A549 (cell line): ENCODE measurements at regions of chr14 and their contacts with region 1.

Region 1: GRCh38 chr14:55051426-55052268 is at the start of gene MAPK1IP1L:
- DNase-seq: peak; percentile 90 to 91
- ATAC-seq: peak; percentile 95 to 96
- H3K4me3 ChIP-seq: peak within 1 kb of the TSS; percentile 95
- H3K27ac ChIP-seq: peak within 1 kb of the TSS; percentile 98 to 100
- H3K4me1 ChIP-seq: peaks cover 29% of the 10 kb centered on the region
- CTCF ChIP-seq: peak; percentile 88
- EP300 ChIP-seq: 0 out of 5 replicates have a peak, but pooled peaks of 1 of the 2 experiments have one; percentile 10
- POLR2A ChIP-seq: peak; percentile 92
- RAD21 ChIP-seq: peak; percentile 31 to 61; a peak in 4 of 5 replicates
- polyA plus RNA-seq, gene MAPK1IP1L: 72.3 and 76.1 TPM in 2 replicates

Region 2: GRCh38 chr14:55026793-55027561 is 24.7 kb before region 1 on chr14 and contains the starts of genes SOCS4 and WDHD1:
- CTCF ChIA-PET with region 1: interaction called, 24 read pairs
- POLR2A ChIA-PET with region 1: interaction called, 43 read pairs
- DNase-seq: peak; percentile 81 to 96
- ATAC-seq: peak; percentile 96 to 97
- H3K4me3 ChIP-seq: peak within 1 kb of the TSS; percentile 69
- H3K27ac ChIP-seq: peak within 1 kb of the TSS; percentile 83 to 96
- H3K4me1 ChIP-seq: peaks cover 52% of the 10 kb centered on the region
- CTCF ChIP-seq: no peak
- EP300 ChIP-seq: no peak
- POLR2A ChIP-seq: peak; percentile 75
- RAD21 ChIP-seq: no peak
- polyA plus RNA-seq, gene SOCS4: 15.3 and 15.9 TPM in 2 replicates
- polyA plus RNA-seq, gene WDHD1: 21.1 and 35.6 TPM in 2 replicates

Region 3: DNA sequence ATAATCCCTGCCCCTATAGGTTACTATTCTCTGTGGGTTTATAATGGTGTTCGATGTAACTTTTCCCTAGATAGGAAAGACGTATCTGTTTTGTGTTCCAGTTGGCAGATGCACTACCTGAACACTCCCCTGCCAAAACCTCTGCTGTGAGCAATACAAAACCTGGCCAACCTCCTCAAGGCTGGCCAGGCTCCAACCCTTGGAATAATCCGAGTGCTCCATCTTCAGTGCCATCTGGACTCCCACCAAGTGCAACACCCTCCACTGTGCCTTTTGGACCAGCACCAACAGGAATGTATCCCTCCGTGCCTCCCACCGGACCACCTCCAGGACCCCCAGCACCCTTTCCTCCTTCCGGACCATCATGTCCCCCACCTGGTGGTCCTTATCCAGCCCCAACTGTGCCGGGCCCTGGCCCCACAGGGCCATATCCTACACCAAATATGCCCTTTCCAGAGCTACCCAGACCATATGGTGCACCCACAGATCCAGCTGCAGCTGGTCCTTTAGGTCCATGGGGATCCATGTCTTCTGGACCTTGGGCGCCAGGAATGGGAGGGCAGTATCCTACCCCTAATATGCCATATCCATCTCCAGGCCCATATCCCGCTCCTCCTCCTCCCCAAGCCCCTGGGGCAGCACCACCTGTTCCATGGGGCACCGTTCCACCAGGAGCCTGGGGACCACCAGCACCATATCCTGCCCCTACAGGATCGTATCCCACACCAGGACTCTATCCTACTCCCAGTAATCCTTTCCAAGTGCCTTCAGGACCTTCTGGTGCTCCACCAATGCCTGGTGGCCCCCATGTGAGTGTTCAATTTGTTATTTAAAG is 11.1 kb after region 1 on chr14:
- CTCF ChIA-PET with region 1: interaction called, 24 read pairs
- POLR2A ChIA-PET with region 1: interaction called, 7 read pairs
- DNase-seq: no peak
- ATAC-seq: peak; percentile 42 to 49; a peak in 5 of 6 replicates
- H3K4me3 ChIP-seq: no peak overlapping the region
- H3K27ac ChIP-seq: no peak overlapping the region
- H3K4me1 ChIP-seq: no peaks in the 10 kb centered on the region
- CTCF ChIP-seq: no peak
- EP300 ChIP-seq: no peak
- POLR2A ChIP-seq: no peak
- RAD21 ChIP-seq: no peak

Region 4: GRCh38 chr14:55071870-55072640 is 20.4 kb after region 1 on chr14:
- CTCF ChIA-PET with region 1: interaction called, 24 read pairs
- POLR2A ChIA-PET with region 1: interaction called, 9 read pairs
- DNase-seq: peak in 1 of 2 experiments; percentile 32
- ATAC-seq: peak; percentile 51 to 58; a peak in 5 of 6 replicates
- H3K4me3 ChIP-seq: no peak overlapping the region
- H3K27ac ChIP-seq: no peak overlapping the region
- H3K4me1 ChIP-seq: peaks cover 3% of the 10 kb centered on the region; the same call in 1 of the 3 replicates
- CTCF ChIP-seq: no peak
- EP300 ChIP-seq: no peak
- POLR2A ChIP-seq: no peak
- RAD21 ChIP-seq: no peak

Region 5: GRCh38 chr14:55102141-55102621 is 50.5 kb after region 1 on chr14:
- CTCF ChIA-PET with region 1: interaction called, 6 read pairs
- POLR2A ChIA-PET with region 1: interaction called, 12 read pairs
- DNase-seq: peak; percentile 62 to 84
- ATAC-seq: peak; percentile 69 to 76
- H3K4me3 ChIP-seq: peak overlapping the region; percentile 33; the same call in 2 of the 3 replicates
- H3K27ac ChIP-seq: peak overlapping the region; percentile 91 to 93
- H3K4me1 ChIP-seq: peaks cover 27% of the 10 kb centered on the region
- CTCF ChIP-seq: no peak
- EP300 ChIP-seq: no peak
- POLR2A ChIP-seq: no peak; the same call in 1 of the 2 replicates
- RAD21 ChIP-seq: no peak; a peak in 1 of 5 replicates